ENCODE measurements at regions of chr16 and their contacts with region 1.

Region 1: GRCh38 chr16:9258423-9259051 is 167.1 kb downstream of the HAPSTR1 start:
- DNase-seq: peak; percentile 34
- ATAC-seq: peak; percentile 84
- H3K4me3 ChIP-seq: no peak overlapping the region
- H3K27ac ChIP-seq: no peak overlapping the region
- H3K4me1 ChIP-seq: 0 out of 4 replicates have a peak, but pooled peaks cover 0 to 3% of the 10 kb centered on the region in 2 experiments
- H3K27me3 ChIP-seq: peaks cover 15% of the 10 kb centered on the region
- CTCF ChIP-seq: peak; percentile 64 to 93 (median 88)
- POLR2A ChIP-seq: no peak
- RAD21 ChIP-seq: peak; percentile 83

Region 2: DNA sequence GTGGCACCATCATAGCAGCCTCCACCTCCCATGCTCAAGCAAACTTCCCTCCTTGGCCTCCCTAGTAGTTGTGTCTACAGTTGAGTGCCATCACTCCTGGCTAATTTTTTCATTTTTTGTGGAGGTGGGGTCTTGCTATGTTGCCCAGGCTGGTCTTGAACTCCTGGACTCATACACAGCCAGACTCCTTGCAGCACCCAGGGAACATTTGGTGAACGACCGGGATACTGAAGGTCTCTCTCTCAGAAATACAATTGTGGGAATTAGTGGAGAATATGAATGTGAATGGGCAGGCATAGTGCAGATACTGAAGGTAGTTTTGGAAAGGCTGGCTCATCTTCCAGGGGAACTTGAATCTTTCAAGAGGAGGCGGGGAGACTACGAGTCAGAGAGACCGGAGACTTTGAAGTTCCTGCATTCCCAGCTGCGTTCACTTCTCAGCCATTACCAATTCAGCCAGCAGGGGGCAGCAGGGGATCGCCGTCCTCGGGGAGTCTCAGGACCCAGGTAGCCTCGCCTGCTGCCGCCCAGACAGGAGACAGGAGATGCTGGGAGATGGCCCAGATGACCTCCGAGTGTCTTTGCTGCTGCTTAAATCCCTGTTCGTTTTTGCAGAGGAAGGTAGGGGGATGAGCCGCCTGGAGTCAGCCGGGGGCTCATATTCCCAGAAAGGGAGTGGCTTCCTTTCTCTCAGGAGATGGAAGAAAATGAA is 98.5 kb before region 1 on chr16:
- CTCF ChIA-PET with region 1: interaction called, 3 read pairs
- POLR2A ChIA-PET with region 1: no interaction called
- RAD21 ChIA-PET with region 1: no interaction called
- intact Hi-C with region 1: loop called (anchors 5 kb)
- DNase-seq: peak; percentile 75
- ATAC-seq: peak; percentile 98
- H3K4me3 ChIP-seq: no peak overlapping the region
- H3K27ac ChIP-seq: no peak overlapping the region
- H3K4me1 ChIP-seq: peaks cover 0 to 12% of the 10 kb centered on the region in 2 experiments; a peak in 1 of 4 replicates
- H3K27me3 ChIP-seq: no peaks in the 10 kb centered on the region
- CTCF ChIP-seq: peak; percentile 69 to 88 (median 86)
- POLR2A ChIP-seq: no peak
- RAD21 ChIP-seq: peak; percentile 91

Region 3: GRCh38 chr16:9248162-9248561 is 10.4 kb before region 1 on chr16:
- CTCF ChIA-PET with region 1: interaction called, 13 read pairs
- POLR2A ChIA-PET with region 1: no interaction called
- RAD21 ChIA-PET with region 1: no interaction called
- intact Hi-C with region 1: no loop called
- DNase-seq: no peak
- ATAC-seq: no peak
- H3K4me3 ChIP-seq: no peak overlapping the region
- H3K27ac ChIP-seq: no peak overlapping the region
- H3K4me1 ChIP-seq: no peaks in the 10 kb centered on the region
- H3K27me3 ChIP-seq: peaks cover 18% of the 10 kb centered on the region
- CTCF ChIP-seq: no peak
- POLR2A ChIP-seq: no peak
- RAD21 ChIP-seq: no peak

Region 4: DNA sequence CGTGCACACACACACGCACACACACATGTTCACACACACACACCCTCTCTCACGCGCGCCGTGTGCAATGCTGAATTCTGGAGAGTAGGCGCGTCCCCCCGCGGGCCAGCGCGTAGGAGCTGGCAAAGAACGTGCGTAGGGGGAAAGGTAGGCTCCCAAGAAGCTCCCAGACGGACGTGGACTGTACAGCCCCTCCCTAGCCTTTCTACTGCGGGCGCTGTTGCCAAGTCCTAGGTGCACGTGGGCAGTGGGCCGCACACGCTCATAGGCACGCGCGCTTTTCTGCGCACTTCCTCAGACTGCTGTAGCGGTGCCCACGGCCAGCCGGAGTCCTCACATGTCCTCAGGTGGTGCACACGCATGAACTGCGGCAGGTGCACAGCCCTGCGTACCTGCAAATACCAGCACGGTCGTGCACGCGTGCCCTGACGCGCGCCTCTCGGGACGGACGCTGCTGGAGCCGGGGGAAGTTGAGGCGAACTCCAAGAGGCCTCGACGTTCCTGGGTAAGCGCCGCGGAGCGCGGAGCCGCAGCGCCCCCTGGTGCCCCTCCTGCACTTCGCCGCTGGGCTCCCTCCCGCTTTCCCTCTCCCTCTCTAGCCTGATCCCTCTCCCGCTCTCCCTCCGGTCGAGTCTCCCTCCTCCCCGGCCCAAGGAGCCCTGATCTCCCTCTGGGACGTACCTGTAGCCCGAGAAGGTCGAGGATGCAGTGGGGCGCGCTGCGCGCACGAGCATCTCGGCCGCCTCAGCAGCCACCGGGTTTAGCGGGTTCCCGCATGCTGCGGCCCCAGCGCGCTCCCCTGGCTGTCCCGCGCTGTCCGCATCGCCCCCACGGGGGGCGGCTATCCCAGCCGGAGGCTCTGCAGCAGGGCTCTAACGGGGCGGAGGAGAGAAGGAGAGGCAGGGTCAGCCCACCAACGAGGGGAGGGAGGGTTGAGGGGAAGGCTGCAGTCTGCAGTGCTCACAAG is 922.9 kb after region 1 on chr16:
- CTCF ChIA-PET with region 1: interaction called, 12 read pairs
- POLR2A ChIA-PET with region 1: no interaction called
- RAD21 ChIA-PET with region 1: no interaction called
- intact Hi-C with region 1: loop called (anchors 1 kb)
- DNase-seq: peak; percentile 21
- ATAC-seq: peak; percentile 93
- H3K4me3 ChIP-seq: no peak overlapping the region
- H3K27ac ChIP-seq: no peak overlapping the region
- H3K4me1 ChIP-seq: peaks cover 0 to 4% of the 10 kb centered on the region in 2 experiments; a peak in 1 of 4 replicates
- H3K27me3 ChIP-seq: no peaks in the 10 kb centered on the region
- CTCF ChIP-seq: peak; percentile 52 to 93 (median 77); a peak in 5 of 6 replicates
- POLR2A ChIP-seq: no peak
- RAD21 ChIP-seq: peak; percentile 90

Measured in HCT116 (cell line).